ENCODE measurements at regions of chr3 and their contacts with region 1.

Region 1: DNA sequence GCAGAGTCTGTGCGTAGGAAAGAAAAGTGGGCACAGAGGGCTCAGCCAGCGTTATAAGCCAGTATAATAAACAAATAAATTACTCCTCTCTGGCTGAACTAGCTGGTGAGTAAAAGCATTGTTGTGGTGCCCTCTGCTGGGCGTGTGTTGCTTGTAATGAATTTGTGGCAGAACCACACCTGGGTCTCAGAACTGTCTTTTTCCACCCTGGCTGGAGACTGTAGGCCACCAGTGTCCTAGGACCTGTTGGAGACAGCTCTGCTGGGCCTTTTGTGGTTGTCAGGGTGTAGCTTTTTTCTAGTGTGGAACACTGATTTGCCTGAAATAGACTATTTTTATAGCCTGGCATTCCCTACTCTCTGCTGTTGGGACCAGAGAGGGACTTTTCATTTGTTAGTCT is 130.5 kb upstream of the EIF1B start:
- DNase-seq: peak; percentile 81 to 89
- H3K4me3 ChIP-seq: no peak overlapping the region
- H3K27ac ChIP-seq: no peak overlapping the region
- H3K4me1 ChIP-seq: peaks cover 0 to 6% (median 2%) of the 10 kb centered on the region in 4 donors
- H3K27me3 ChIP-seq: no peaks in the 10 kb centered on the region
- CTCF ChIP-seq: peak in 5 of 7 experiments; percentile 37 to 73 (median 53)
- EP300 ChIP-seq: no peak
- POLR2A ChIP-seq: no peak

Region 2: GRCh38 chr3:39724233-39724846 is 454.7 kb before region 1 on chr3:
- intact Hi-C with region 1: loop called (anchors 10 kb)
- DNase-seq: peak in 1 of 2 donors; percentile 21
- H3K4me3 ChIP-seq: no peak overlapping the region
- H3K27ac ChIP-seq: no peak overlapping the region
- H3K4me1 ChIP-seq: no peaks in the 10 kb centered on the region
- H3K27me3 ChIP-seq: no peaks in the 10 kb centered on the region
- CTCF ChIP-seq: peak in 4 of 7 experiments; percentile 20 to 65 (median 38)
- EP300 ChIP-seq: no peak
- POLR2A ChIP-seq: no peak

Region 3: GRCh38 chr3:39882111-39882510 is 296.9 kb before region 1 on chr3:
- intact Hi-C with region 1: no loop called
- DNase-seq: no peak
- H3K4me3 ChIP-seq: no peak overlapping the region
- H3K27ac ChIP-seq: no peak overlapping the region
- H3K4me1 ChIP-seq: no peaks in the 10 kb centered on the region
- H3K27me3 ChIP-seq: no peaks in the 10 kb centered on the region
- CTCF ChIP-seq: no peak
- EP300 ChIP-seq: no peak
- POLR2A ChIP-seq: no peak

Region 4: DNA sequence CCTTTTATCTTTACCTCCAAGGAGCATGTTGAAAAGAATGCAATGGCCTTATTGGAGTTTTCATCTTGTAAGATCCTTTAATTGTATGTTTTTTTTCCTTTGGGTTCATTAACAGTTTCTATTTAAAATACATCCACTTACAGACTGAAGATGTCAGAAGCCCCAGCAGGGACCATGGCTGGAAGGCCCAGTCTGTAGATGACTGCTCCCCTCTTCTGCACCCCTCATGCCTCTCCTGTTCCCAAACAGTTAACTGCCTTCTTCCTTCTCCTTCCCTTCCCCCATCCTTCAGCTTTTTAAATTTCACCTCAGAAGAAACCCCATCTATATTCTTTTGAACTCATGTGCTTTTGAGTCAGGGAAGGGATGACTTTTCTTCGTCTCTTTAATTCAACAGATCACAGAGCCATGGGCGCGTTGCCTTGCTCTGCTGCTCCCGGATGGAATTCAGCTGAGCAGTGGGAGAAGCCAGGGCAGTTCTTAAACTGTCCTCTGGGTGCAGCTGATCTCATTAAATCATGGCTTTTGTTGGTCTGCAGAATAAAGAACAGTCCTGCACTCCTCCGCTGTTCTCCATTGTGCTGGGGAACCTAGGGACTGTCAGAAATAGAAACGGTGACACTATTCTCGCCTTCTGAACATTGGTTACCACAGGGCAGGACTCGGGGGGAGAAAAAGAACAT is 59.0 kb after region 1 on chr3:
- intact Hi-C with region 1: no loop called
- DNase-seq: peak in 1 of 2 donors; percentile 26
- H3K4me3 ChIP-seq: no peak overlapping the region
- H3K27ac ChIP-seq: no peak overlapping the region
- H3K4me1 ChIP-seq: no peaks in the 10 kb centered on the region
- H3K27me3 ChIP-seq: no peaks in the 10 kb centered on the region
- CTCF ChIP-seq: no peak
- EP300 ChIP-seq: no peak
- POLR2A ChIP-seq: no peak

Region 5: GRCh38 chr3:40366203-40367162 is 187.5 kb after region 1 on chr3:
- intact Hi-C with region 1: no loop called
- DNase-seq: peak in 1 of 2 donors; percentile 9
- H3K4me3 ChIP-seq: no peak overlapping the region
- H3K27ac ChIP-seq: no peak overlapping the region
- H3K4me1 ChIP-seq: no peaks in the 10 kb centered on the region
- H3K27me3 ChIP-seq: no peaks in the 10 kb centered on the region
- CTCF ChIP-seq: no peak
- EP300 ChIP-seq: no peak
- POLR2A ChIP-seq: no peak